CD8-positive, alpha-beta T cell (primary cell): ENCODE measurements at regions of chr18 and their contacts with region 1.

Region 1: DNA sequence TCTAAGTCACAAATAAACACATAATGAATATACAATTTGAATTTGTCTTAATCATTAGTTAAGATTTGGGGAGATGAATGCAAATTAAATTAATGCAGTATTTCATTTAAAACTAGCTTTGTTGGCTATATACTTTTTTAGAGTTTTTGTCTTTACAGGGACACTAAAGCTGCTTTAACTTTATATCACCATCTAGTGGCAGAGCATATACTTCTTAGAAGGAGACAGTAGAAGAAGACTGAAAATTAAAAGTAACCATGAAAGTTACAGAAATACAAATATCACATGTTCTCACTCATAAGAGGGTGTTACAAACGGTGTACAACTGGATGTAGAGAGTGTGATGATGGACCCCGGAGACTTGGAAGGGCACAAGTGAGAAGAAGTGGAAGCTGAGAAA is 268.3 kb upstream of the NETO1 start:
- DNase-seq: no peak
- ATAC-seq: no peak
- H3K4me3 ChIP-seq: no peak overlapping the region
- H3K4me3 Mint-ChIP-seq: no peak overlapping the region
- H3K27ac ChIP-seq: no peak overlapping the region
- H3K27ac Mint-ChIP-seq: no peak overlapping the region
- H3K4me1 ChIP-seq: no peaks in the 10 kb centered on the region
- H3K4me1 Mint-ChIP-seq: no peaks in the 10 kb centered on the region
- H3K27me3 ChIP-seq: no peaks in the 10 kb centered on the region
- H3K27me3 Mint-ChIP-seq: no peaks in the 10 kb centered on the region
- CTCF ChIP-seq: no peak

Region 2: DNA sequence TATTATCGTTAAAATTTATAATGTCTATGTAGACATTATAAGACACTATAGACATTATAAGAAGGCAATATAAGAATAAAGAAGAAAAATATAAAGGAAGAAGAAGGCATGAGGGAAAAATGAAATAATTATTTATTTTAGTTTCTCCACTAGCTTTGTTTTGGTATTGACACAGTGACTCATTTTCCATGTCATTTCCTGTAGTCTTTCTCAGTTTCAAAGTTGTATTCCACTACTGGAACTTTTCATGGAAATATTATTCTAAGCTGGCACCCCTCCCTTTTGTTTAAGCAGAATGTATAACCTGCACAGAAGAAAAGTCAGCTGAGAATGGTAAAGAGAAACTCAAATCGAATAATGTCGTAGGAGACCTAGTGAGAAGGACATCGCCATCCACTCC is 34.2 kb before region 1 on chr18:
- CTCF ChIA-PET with region 1: no interaction called
- POLR2A ChIA-PET with region 1: no interaction called
- intact Hi-C with region 1: loop called in 1 of 2 experiments (anchors 1 kb)
- DNase-seq: no peak
- ATAC-seq: no peak
- H3K4me3 ChIP-seq: no peak overlapping the region
- H3K4me3 Mint-ChIP-seq: no peak overlapping the region
- H3K27ac ChIP-seq: no peak overlapping the region
- H3K27ac Mint-ChIP-seq: no peak overlapping the region
- H3K4me1 ChIP-seq: no peaks in the 10 kb centered on the region
- H3K4me1 Mint-ChIP-seq: no peaks in the 10 kb centered on the region
- H3K27me3 ChIP-seq: no peaks in the 10 kb centered on the region
- H3K27me3 Mint-ChIP-seq: no peaks in the 10 kb centered on the region
- CTCF ChIP-seq: no peak